ENCODE measurements at regions of chr7 and their contacts with region 1.

Region 1: GRCh38 chr7:50369143-50370026 is 64.9 kb downstream of the IKZF1 start:
- DNase-seq: peak; percentile 67
- H3K4me3 Mint-ChIP-seq: no peak overlapping the region
- H3K27ac Mint-ChIP-seq: peak overlapping the region; percentile 92
- H3K4me1 Mint-ChIP-seq: peaks cover 96% of the 10 kb centered on the region
- H3K27me3 Mint-ChIP-seq: no peaks in the 10 kb centered on the region

Region 2: GRCh38 chr7:49707891-49708290 is 661.5 kb before region 1 on chr7:
- CTCF ChIA-PET with region 1: no interaction called
- intact Hi-C with region 1: no loop called
- DNase-seq: no peak
- H3K4me3 Mint-ChIP-seq: no peak overlapping the region
- H3K27ac Mint-ChIP-seq: no peak overlapping the region
- H3K4me1 Mint-ChIP-seq: no peaks in the 10 kb centered on the region
- H3K27me3 Mint-ChIP-seq: no peaks in the 10 kb centered on the region

Region 3: DNA sequence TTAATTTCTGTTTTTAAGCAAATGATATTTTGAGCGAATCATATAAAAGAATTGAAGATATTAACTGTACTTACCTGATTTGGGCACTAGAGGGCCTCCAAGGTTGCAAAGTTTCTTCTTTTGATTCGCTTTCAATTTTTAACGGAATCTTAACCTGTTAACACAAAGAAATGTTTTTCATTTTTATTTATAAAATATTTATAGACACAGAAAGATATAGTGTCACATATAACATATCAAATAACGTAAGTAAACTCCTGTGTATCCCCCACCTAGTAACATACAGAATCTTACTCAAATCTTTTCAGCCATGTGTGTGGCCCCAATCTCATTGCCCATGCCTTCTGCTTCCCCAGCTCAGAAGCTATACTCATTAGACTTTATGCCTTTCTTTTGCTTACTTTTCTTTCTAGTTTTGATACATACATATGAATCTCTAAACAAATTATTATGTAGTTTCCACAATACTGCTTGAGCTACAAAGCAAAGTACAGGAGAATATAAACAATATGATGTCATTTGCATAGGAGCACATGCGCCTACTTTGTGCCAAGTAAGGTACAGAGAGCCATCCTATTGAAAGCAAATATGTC is 226.9 kb before region 1 on chr7:
- CTCF ChIA-PET with region 1: interaction called, 26 read pairs
- intact Hi-C with region 1: loop called (anchors 1 kb)
- DNase-seq: peak; percentile 64
- H3K4me3 Mint-ChIP-seq: peak overlapping the region; percentile 45
- H3K27ac Mint-ChIP-seq: peak overlapping the region; percentile 82
- H3K4me1 Mint-ChIP-seq: peaks cover 43% of the 10 kb centered on the region
- H3K27me3 Mint-ChIP-seq: no peaks in the 10 kb centered on the region

Region 4: GRCh38 chr7:50227726-50228125 is 141.7 kb before region 1 on chr7:
- CTCF ChIA-PET with region 1: interaction called, 13 read pairs
- intact Hi-C with region 1: loop called (anchors 1 kb)
- DNase-seq: no peak
- H3K4me3 Mint-ChIP-seq: peak overlapping the region; percentile 64
- H3K27ac Mint-ChIP-seq: peak overlapping the region; percentile 81
- H3K4me1 Mint-ChIP-seq: peaks cover 37% of the 10 kb centered on the region
- H3K27me3 Mint-ChIP-seq: no peaks in the 10 kb centered on the region

Region 5: DNA sequence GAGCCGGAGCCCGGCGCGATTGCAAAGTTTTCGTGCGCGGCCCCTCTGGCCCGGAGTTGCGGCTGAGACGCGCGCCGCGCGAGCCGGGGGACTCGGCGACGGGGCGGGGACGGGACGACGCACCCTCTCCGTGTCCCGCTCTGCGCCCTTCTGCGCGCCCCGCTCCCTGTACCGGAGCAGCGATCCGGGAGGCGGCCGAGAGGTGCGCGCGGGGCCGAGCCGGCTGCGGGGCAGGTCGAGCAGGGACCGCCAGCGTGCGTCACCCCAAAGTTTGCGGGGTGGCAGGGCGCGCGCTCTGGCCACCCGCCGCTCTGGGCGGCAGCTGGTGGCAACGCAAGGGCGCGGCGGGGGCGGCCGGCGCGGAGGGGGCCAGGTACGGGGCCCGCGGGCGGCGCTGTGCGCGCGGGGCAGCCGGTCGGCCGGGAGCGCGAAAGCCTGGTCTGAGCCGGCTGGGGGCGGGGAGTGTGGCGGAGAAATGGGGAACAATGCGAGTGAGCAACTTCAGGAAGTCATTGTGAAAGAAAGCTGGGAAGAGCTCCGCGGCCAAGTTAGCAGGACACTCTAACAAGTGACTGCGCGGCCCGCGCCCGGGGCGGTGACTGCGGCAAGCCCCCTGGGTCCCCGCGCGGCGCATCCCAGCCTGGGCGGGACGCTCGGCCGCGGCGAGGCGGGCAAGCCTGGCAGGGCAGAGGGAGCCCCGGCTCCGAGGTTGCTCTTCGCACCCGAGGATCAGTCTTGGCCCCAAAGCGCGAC is 65.1 kb before region 1 on chr7 and contains the start of gene IKZF1:
- CTCF ChIA-PET with region 1: interaction called, 137 read pairs
- intact Hi-C with region 1: loop called (anchors 1 kb)
- DNase-seq: peak; percentile 74
- H3K4me3 Mint-ChIP-seq: peak within 1 kb of the TSS; percentile 95
- H3K27ac Mint-ChIP-seq: peak within 1 kb of the TSS; percentile 99
- H3K4me1 Mint-ChIP-seq: peaks cover 34% of the 10 kb centered on the region
- H3K27me3 Mint-ChIP-seq: no peaks in the 10 kb centered on the region
- total RNA-seq, gene IKZF1: 213 to 226 TPM

Region 6: GRCh38 chr7:50349963-50350944 is 19.1 kb before region 1 on chr7:
- CTCF ChIA-PET with region 1: interaction called, 264 read pairs
- intact Hi-C with region 1: loop called (anchors 1 kb)
- DNase-seq: peak; percentile 95
- H3K4me3 Mint-ChIP-seq: peak overlapping the region; percentile 33
- H3K27ac Mint-ChIP-seq: peak overlapping the region; percentile 95
- H3K4me1 Mint-ChIP-seq: peaks cover 97% of the 10 kb centered on the region
- H3K27me3 Mint-ChIP-seq: no peaks in the 10 kb centered on the region

Region 7: GRCh38 chr7:50418086-50418515 is 48.7 kb after region 1 on chr7:
- CTCF ChIA-PET with region 1: interaction called, 38 read pairs
- intact Hi-C with region 1: loop called (anchors 1 kb)
- DNase-seq: peak; percentile 92
- H3K4me3 Mint-ChIP-seq: no peak overlapping the region
- H3K27ac Mint-ChIP-seq: no peak overlapping the region
- H3K4me1 Mint-ChIP-seq: peaks cover 24% of the 10 kb centered on the region
- H3K27me3 Mint-ChIP-seq: no peaks in the 10 kb centered on the region

Region 8: DNA sequence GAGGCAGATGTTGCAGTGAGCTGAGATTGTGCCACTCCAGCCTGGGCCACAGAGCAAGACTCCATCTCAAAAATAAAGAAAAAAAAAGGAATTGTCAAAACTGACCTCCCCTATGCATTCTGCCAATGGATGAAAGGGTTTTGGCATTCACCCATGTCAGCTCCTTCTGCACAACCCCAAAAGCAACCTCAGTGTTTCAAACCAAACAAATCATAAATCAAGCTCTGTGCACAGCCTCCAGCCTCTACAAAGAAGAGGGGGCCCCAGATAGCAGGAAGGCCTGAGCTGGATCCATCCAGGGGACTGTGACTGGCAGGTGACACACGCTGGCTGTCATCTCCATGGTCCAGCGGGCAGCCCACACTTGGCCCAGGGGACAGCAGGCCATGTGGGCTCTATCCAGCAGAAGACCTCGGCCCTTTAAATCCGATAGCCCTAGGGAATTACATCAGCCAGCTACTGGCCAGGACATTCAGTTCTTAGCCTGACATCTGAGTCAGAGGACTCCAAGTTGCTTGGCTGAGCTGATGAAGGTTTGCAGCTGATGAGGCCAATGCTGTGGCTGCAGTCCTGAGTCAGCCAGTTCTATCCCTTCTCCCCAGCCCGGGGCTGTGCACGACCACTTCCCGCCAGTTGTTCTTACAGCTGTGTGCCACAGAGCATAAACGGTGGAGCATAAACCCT is 132.8 kb after region 1 on chr7:
- CTCF ChIA-PET with region 1: no interaction called
- intact Hi-C with region 1: no loop called
- DNase-seq: no peak
- H3K4me3 Mint-ChIP-seq: no peak overlapping the region
- H3K27ac Mint-ChIP-seq: no peak overlapping the region
- H3K4me1 Mint-ChIP-seq: peaks cover 2% of the 10 kb centered on the region
- H3K27me3 Mint-ChIP-seq: peaks cover 8% of the 10 kb centered on the region